ENCODE measurements at regions of chr9 and their contacts with region 1.

Region 1: DNA sequence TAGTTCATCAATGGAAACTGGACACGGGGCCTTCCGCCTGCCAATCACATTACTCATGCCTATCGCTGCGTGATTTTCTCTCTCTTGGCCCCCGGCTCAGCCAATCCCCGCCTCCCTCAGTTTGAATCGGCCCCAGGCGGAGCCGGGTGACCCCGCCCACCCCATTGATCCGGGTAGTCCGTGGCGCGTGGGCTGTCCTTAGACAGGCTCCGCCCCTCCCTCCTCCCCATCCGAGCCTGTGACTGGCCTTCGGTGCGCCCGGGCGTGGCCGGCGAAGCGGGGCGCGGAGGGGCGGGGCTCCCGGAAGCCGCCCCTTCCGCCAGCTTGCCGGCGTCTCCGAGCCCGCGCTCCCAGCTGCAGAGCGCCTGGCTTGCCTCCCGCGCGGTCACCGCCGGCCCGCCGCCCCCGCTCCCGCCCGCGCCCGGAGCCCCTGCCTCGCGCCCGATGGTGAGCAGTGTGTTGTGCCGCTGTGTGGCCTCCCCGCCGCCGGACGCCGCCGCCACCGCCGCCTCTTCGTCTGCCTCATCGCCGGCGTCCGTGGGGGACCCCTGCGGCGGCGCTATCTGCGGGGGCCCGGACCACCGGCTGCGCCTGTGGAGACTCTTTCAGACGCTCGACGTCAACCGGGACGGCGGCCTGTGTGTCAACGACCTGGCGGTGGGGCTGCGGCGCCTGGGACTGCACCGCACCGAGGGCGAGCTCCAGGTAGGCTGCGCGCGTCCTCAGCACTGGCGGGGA is at the start of gene SLC25A25:
- DNase-seq: peak; percentile 99 to 100 (median 100)
- ATAC-seq: peak; percentile 73 to 82
- H3K4me3 Mint-ChIP-seq: peak within 1 kb of the TSS in 8 of 10 donors; percentile 93 to 96 (median 95)
- H3K27ac Mint-ChIP-seq: peak within 1 kb of the TSS; percentile 70 to 96 (median 91)
- H3K4me1 Mint-ChIP-seq: peaks cover 25 to 69% (median 48%) of the 10 kb centered on the region in 4 donors
- H3K27me3 Mint-ChIP-seq: no peaks in the 10 kb centered on the region
- polyA plus RNA-seq, gene SLC25A25: 12.1 to 17.8 (median 13.8) TPM

Region 2: DNA sequence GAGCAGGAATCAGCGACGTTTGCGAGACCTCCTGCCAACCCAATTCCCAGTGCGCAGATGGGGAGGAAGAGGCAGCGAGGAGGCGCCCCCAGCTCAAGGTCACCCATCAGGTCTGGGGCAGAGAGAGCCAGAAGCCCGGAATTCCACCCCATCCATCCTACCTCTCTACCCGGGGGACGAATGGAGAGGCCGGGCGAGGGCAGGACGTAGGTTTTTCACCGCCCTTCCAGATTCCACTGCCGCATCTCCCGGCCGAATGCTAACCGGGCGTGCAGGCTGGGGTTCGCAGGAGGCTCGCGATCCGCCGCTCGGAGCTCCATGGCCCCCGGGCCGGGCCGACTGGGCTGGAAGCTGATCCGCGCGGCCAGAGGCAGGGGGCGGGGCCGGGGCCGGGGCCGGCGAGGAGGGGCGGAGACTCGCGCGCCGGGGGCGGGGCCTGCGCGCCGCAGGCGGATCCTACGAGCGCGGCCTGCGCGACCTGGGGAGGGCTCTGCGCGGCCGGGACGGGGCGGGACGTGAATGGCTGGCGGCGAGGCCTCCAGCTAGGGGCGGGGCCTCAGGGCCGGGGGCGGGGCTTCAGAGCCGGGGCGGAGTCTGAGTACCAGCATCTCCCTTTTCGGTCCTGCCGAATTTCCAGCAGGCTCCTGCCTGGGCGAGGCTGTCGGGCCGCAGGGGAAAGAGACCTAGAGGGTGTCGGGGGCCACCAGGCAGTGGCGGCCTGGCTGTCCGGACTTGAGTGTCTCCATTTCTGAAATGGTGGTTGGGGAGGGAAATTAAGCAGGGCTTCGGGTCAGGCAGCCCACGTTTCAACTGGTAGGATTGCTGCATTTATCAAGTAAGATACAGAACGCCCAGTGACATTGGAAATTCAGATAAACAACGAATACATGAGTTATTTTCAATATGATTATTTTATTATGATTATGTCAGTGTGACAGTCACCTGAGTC is 151.1 kb before region 1 on chr9 and contains the start of gene ST6GALNAC4:
- POLR2A ChIA-PET with region 1: no interaction called
- DNase-seq: peak; percentile 85 to 98 (median 92)
- ATAC-seq: peak; percentile 85 to 88
- H3K4me3 Mint-ChIP-seq: peak within 1 kb of the TSS; percentile 85 to 95 (median 92)
- H3K27ac Mint-ChIP-seq: peak within 1 kb of the TSS; percentile 83 to 98 (median 96)
- H3K4me1 Mint-ChIP-seq: peaks cover 25 to 70% (median 59%) of the 10 kb centered on the region in 4 donors
- H3K27me3 Mint-ChIP-seq: no peaks in the 10 kb centered on the region
- polyA plus RNA-seq, gene ST6GALNAC4: 19.8 to 34.4 (median 22.1) TPM

Region 3: DNA sequence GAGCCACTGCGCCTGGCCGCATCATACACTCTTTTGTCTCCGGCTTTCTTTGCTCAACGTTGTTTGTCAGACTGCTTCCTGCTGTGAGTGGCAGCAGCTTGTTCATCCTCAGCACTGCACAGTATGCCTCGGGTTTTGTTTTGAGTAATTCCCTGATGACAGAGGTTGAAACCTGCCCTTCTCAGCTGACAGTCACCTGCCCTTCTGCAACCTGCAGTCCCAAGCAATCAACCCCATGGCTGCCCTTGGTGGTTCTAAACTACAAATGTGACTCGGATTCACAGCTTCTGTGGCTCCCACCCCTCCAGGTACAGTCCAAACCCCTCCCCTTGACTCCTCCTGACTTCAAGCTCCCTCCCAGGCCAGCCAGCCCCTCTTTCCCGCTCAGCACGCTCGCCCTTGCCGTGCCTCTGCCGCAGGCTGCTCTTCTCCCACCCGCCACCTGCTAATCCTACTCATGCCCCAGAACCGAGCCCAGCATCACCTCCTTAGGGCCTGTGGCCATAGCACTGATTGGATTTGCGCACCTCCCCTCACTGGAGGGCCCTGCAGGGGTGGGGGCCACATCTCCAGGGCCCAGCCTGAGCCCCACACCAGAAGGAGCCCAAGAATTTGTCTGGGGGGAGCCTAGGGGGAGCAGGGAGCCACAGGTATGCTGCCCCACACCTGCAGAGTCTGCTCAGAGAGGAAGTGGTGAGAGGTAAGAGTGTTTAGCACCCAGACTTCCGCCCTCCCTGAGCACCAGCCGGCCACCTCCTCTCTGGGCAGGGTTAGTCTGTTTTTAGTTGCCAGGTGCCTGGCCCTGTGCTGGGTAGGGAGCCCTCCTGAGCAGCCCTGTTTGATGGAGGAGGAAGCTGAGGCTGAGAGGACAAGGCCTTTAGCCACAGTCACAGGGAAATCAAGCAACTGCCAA is 97.4 kb before region 1 on chr9:
- POLR2A ChIA-PET with region 1: interaction called, 28 read pairs
- DNase-seq: peak in 9 of 10 donors; percentile 58 to 87 (median 74)
- ATAC-seq: peak; percentile 57 to 75
- H3K4me3 Mint-ChIP-seq: peak overlapping the region; percentile 87 to 99 (median 92)
- H3K27ac Mint-ChIP-seq: peak overlapping the region; percentile 92 to 100 (median 98)
- H3K4me1 Mint-ChIP-seq: peaks cover 54 to 97% (median 93%) of the 10 kb centered on the region in 4 donors
- H3K27me3 Mint-ChIP-seq: no peaks in the 10 kb centered on the region

Region 4: DNA sequence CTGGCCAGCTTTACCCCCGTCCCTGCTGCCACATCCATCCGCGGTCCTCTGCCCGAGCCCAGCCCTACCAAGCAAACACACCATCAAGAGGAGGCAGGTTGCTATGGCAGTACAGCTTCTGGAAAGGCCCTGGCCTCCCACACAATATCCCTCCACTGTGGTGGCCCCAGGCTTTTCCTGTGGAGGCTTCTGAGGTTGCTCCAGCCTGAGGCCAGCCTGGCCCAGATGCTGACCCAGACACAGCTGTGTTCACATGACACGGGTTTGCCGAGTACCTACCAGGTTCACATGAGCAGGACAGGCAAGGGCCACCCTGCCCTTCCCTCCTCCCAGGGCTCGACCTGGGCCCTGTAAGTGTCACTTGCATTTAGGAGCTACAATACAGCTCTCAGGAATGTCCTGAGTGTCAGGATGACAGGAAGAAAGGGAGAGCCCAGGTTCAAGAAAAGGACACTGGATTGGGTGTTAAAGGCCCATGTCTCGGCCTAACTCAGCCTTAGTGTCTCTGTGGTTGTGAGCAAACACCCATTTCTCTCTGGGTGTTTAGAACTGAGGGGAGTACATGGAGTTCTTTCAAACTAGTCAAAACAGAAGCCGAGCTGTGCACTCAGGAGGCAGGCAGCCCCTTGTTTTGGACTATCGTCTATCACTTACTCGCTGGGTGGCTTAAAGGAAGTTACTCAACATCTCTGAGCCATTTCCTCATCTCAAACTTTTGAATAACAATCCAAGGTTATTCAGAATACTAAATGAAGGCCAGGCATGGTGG is 41.1 kb before region 1 on chr9:
- POLR2A ChIA-PET with region 1: interaction called, 10 read pairs
- DNase-seq: peak in 6 of 10 donors; percentile 28 to 73 (median 56)
- ATAC-seq: peak; percentile 11 to 26
- H3K4me3 Mint-ChIP-seq: peak overlapping the region; percentile 72 to 89 (median 84)
- H3K27ac Mint-ChIP-seq: peak overlapping the region; percentile 95 to 100 (median 99)
- H3K4me1 Mint-ChIP-seq: peaks cover 38 to 92% (median 83%) of the 10 kb centered on the region in 4 donors
- H3K27me3 Mint-ChIP-seq: no peaks in the 10 kb centered on the region

Region 5: GRCh38 chr9:128088253-128088945 is 20.4 kb after region 1 on chr9:
- POLR2A ChIA-PET with region 1: interaction called, 54 read pairs
- DNase-seq: peak in 2 of 10 donors; percentile 32 to 38
- ATAC-seq: peak; percentile 18 to 34
- H3K4me3 Mint-ChIP-seq: peak overlapping the region in 9 of 10 donors; percentile 24 to 70 (median 59)
- H3K27ac Mint-ChIP-seq: peak overlapping the region; percentile 61 to 89 (median 78)
- H3K4me1 Mint-ChIP-seq: peaks cover 34 to 74% (median 69%) of the 10 kb centered on the region in 4 donors
- H3K27me3 Mint-ChIP-seq: no peaks in the 10 kb centered on the region

Region 6: DNA sequence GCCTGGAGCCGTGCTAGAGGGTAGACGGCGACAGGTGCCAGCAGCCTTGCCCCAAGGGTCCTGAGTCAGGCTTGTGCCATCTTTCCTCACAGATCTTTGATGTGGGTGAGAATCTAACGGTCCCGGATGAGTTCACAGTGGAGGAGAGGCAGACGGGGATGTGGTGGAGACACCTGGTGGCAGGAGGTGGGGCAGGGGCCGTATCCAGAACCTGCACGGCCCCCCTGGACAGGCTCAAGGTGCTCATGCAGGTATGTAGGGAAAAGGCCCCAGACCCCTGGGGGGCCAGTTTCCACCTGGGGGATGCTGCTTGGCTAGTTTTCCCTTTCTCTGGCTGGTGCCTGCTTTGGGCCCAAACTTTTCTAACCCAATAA is 35.5 kb after region 1 on chr9:
- POLR2A ChIA-PET with region 1: interaction called, 23 read pairs
- DNase-seq: peak in 5 of 10 donors; percentile 34 to 51 (median 45)
- ATAC-seq: peak; percentile 61 to 70
- H3K4me3 Mint-ChIP-seq: peak overlapping the region in 8 of 10 donors; percentile 19 to 66 (median 48)
- H3K27ac Mint-ChIP-seq: peak overlapping the region; percentile 56 to 92 (median 82)
- H3K4me1 Mint-ChIP-seq: peaks cover 20 to 70% (median 52%) of the 10 kb centered on the region in 4 donors
- H3K27me3 Mint-ChIP-seq: no peaks in the 10 kb centered on the region

Region 7: DNA sequence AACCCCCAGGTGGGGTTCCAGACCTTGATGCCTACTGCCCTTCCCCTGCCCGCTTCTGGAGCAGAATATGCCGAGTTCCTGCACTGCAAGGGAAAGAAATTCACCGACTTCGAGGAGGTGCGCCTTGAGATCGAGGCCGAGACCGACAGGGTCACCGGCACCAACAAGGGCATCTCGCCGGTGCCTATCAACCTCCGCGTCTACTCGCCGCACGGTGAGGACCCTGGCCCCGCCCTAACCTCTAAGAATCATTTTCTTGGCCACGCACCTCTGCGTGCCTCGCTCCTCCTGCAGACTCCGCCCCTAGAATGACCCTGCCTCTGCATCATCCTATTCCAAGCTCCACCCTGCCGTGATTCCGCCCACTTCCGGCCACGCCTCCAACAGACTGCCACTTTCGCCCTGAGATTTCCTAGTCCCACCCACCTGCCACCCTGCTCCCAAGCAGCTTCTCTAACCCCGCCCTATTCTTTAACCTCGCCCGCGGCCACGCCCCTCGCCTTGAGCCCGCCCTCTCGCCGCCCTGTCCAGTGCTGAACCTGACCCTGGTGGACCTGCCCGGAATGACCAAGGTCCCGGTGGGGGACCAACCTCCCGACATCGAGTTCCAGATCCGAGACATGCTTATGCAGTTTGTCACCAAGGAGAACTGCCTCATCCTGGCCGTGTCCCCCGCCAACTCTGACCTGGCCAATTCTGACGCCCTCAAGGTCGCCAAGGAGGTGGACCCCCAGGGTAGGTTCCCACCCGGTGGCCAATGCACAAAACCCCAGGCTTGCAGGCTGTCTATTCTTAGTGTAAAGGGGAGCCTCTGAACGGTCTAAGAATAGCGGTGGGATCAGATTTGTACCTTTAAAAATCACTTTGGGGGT is 150.7 kb after region 1 on chr9:
- POLR2A ChIA-PET with region 1: no interaction called
- DNase-seq: peak; percentile 79 to 95 (median 89)
- ATAC-seq: peak; percentile 95 to 96
- H3K4me3 Mint-ChIP-seq: peak overlapping the region; percentile 81 to 94 (median 86)
- H3K27ac Mint-ChIP-seq: peak overlapping the region; percentile 44 to 87 (median 75)
- H3K4me1 Mint-ChIP-seq: peaks cover 10 to 16% (median 14%) of the 10 kb centered on the region in 4 donors
- H3K27me3 Mint-ChIP-seq: peaks cover 0 to 3% (median 0%) of the 10 kb centered on the region in 5 donors